HEK293 (cell line): ENCODE measurements at regions of chr2 and their contacts with region 1.

Region 1: GRCh38 chr2:219278655-219279516 is at the start of gene DNAJB2:
- H3K4me3 ChIP-seq: peak within 1 kb of the TSS; percentile 54
- H3K27ac ChIP-seq: peak within 1 kb of the TSS; percentile 67
- H3K4me1 ChIP-seq: peaks cover 6% of the 10 kb centered on the region
- CTCF ChIP-seq: no peak

Region 2: DNA sequence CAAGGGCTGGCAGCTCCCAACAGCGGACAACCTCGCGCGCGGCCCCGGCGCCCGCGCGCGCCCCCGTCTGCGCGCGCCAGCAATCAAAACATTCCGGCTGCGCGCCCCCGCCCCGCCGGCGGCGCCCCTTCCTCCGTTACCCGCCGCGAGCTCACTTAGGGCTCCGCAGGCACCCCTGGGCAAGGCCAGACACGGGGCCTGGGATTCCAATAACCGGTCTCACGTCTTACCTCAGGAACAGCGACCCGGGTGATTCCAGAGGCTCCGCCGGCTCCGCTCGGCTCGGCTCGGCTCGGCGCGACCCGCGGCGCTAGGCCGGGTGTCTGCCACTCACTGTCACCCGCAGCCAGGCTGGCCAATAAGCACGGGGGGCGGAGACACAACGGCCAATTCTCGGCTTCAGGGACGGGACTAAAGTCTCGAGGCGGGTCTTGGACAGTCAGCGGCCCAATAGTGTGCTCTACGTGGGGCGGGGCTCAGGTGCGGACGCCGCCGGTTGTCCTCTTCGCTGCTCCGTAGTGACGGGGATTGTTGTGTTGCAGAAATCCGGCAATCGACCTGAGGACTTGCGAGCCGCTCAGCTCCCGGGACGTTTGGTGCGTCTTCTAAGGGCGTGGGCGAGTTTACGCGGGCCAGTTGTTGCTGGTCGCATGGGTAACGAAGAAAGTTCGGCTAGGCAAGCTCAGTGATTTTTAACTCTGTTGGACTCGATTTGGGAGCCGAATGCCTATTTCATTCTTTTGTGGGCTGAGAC is 49.4 kb before region 1 on chr2 and contains the starts of genes ANKZF1 and ATG9A:
- CTCF ChIA-PET with region 1: interaction called, 8 read pairs
- POLR2A ChIA-PET with region 1: interaction called, 11 read pairs
- H3K4me3 ChIP-seq: peak within 1 kb of the TSS; percentile 83
- H3K27ac ChIP-seq: peak within 1 kb of the TSS; percentile 81
- H3K4me1 ChIP-seq: peaks cover 4% of the 10 kb centered on the region; the same call in 1 of the 2 replicates
- CTCF ChIP-seq: no peak

Region 3: GRCh38 chr2:219245148-219245898 is 33.6 kb before region 1 on chr2 and contains the starts of genes GLB1L and STK16:
- CTCF ChIA-PET with region 1: interaction called, 83 read pairs
- POLR2A ChIA-PET with region 1: interaction called, 17 read pairs
- H3K4me3 ChIP-seq: peak within 1 kb of the TSS; percentile 94
- H3K27ac ChIP-seq: peak within 1 kb of the TSS; percentile 85
- H3K4me1 ChIP-seq: peaks cover 10% of the 10 kb centered on the region
- CTCF ChIP-seq: peak; percentile 32; the same call in 1 of the 2 replicates

Region 4: DNA sequence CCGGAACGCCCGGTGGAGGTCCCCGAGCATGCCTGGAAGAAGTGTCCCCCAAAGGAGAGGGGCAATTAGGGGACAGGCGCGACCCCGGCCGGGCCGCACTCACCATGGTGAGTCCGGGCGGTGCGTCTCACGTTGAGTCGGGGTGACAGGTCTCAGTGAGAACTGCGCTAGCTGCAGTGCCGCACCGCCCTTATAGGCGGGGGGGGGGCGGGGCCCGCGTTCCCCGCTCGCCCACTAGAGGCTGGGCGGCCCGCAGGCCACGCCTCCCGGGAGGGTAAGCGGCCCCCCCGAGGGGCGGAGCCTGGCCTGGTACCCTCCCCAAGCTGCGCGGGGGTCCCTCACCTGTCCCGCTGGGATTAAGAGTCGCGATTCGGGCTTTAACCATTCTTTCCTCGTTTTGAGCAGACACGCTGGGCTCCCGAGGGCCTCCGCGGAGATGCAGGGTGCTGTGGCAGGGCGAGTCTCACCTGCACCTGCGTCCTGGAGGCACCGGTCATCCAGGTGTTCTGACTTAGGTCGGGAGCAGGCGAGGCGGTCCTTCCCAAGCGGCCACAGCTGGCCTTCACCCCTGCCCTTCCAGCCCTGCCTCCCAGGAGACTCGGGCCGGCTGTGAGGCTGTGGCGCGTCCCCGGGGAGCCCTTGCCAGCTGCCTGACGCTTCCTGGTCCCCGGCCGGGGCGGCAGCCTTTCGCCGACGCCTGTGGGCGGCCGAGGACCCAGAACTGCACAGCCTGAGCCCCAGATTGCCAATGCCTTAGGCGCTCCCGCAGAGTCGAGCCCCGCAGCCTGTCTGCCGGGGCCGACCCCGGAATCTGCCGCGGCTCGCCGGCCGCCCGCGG is 24.9 kb before region 1 on chr2 and contains the start of gene TUBA4A:
- CTCF ChIA-PET with region 1: interaction called, 83 read pairs
- POLR2A ChIA-PET with region 1: interaction called, 17 read pairs
- H3K4me3 ChIP-seq: peak within 1 kb of the TSS; percentile 55
- H3K27ac ChIP-seq: no peak within 1 kb of the TSS
- H3K4me1 ChIP-seq: peaks cover 4% of the 10 kb centered on the region; the same call in 1 of the 2 replicates
- CTCF ChIP-seq: 0 out of 2 replicates have a peak, but pooled peaks have one; percentile 6

Region 5: GRCh38 chr2:219261024-219261855 is 17.6 kb before region 1 on chr2:
- CTCF ChIA-PET with region 1: interaction called, 34 read pairs
- POLR2A ChIA-PET with region 1: interaction called, 6 read pairs
- H3K4me3 ChIP-seq: no peak overlapping the region
- H3K27ac ChIP-seq: no peak overlapping the region
- H3K4me1 ChIP-seq: no peaks in the 10 kb centered on the region; the same call in 1 of the 2 replicates
- CTCF ChIP-seq: no peak

Region 6: DNA sequence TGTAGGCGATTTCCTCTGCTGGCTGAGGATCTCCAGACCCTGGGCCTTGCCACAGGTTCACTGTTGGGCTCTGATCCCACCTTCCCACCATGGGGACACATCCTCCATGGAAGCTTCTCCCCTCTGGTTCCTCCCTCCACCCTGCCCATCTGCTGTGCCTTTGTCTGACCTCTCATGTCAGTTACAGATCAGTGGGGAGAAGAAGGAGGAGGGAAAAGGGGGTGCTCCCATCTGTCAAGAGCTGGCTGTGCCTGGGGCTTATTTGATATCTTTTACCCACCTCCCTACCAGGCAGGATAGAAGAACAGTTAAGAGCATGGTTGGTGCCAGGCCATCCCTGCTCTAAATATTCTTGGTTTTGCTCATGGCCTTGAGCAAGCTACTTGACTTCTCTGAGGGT is 12.0 kb before region 1 on chr2:
- CTCF ChIA-PET with region 1: interaction called, 34 read pairs
- POLR2A ChIA-PET with region 1: interaction called, 3 read pairs
- H3K4me3 ChIP-seq: no peak overlapping the region
- H3K27ac ChIP-seq: no peak overlapping the region
- H3K4me1 ChIP-seq: no peaks in the 10 kb centered on the region
- CTCF ChIP-seq: no peak

Region 7: DNA sequence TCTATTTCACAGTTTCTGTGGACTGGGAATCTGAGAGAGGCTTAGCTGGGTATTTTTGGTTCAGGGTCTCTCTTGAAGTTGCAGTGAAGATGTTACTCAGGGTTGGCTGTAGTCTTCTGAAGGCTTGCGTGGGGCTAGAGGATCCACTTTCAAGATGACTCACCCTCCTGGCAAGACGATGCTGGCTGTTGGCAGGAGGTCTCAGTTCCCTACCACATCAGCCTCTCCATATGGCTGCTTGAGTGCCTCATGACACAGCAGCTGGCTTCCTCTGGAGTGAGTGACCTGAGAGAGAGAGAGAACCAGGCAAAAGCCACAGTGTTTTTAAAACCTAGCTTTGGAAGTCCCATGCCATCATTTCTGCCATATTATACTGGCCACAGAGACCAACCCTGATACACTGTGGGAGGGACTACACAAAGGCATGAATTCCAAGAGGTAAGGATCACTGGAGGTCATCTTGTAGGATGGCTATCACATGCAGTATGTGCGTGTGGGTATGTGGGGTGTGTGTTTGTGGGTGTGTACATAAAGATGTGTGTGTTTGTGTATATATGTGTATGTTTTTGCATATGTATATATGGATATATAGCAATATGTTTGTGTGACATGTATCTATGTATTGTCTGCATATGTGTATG is 83.8 kb after region 1 on chr2:
- CTCF ChIA-PET with region 1: no interaction called
- POLR2A ChIA-PET with region 1: no interaction called
- H3K4me3 ChIP-seq: no peak overlapping the region
- H3K27ac ChIP-seq: no peak overlapping the region
- H3K4me1 ChIP-seq: peaks cover 7% of the 10 kb centered on the region
- CTCF ChIP-seq: no peak

Region 8: DNA sequence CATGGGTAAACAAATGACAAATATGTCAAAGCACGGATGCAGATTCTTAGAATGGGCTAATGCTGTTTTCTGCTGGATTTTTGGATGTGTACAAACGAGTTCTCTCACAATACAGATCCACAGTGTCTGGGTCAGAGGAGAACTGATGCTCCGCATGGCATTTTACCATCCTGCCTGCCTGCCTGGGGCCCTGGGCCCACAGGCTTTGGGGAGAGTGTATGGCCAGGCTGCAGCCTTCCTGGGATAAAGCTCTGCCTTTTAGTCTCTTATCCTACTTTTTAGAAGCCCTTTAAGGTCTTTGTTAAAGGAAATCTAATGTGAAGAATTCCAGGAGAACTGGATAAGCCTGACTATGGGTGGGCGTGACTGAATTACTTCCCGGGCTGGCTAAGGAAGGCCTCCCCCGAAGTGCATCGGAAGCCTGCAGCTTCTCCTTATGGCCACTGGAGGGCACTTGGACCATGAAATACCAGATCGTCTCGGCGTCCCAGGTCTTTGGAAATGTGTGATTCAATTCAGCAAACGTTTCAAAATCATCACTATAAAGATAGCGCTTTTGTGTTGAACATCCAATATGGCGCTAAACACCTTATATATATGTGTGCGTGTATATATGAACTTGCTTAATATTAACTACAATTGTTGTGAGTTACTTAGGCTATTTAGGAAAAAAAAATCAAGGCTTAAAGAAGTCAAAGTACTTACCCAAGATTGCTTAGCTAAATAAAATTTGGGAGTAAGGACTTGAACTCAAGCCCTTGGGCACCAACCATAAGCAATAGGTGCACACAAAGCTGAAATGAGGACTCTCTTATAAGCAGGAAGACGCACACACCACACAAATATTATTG is 124.0 kb after region 1 on chr2:
- CTCF ChIA-PET with region 1: no interaction called
- POLR2A ChIA-PET with region 1: no interaction called
- H3K4me3 ChIP-seq: no peak overlapping the region
- H3K27ac ChIP-seq: no peak overlapping the region
- H3K4me1 ChIP-seq: peaks cover 19% of the 10 kb centered on the region
- CTCF ChIP-seq: peak; percentile 69